Common myeloid progenitor, CD34-positive (primary cell): ENCODE measurements at regions of chr18 and their contacts with region 1.

Region 1: GRCh38 chr18:80157708-80158343 is 48.8 kb downstream of the ADNP2 start:
- DNase-seq: peak; percentile 73 to 88 (median 80)
- H3K4me3 ChIP-seq: no peak overlapping the region
- H3K27ac ChIP-seq: no peak overlapping the region
- H3K4me1 ChIP-seq: peaks cover 0 to 4% (median 1%) of the 10 kb centered on the region in 4 experiments
- H3K27me3 ChIP-seq: peaks cover 0 to 10% (median 2%) of the 10 kb centered on the region in 5 experiments

Region 2: GRCh38 chr18:80147418-80148325 is 10.2 kb before region 1 on chr18:
- CTCF ChIA-PET with region 1: interaction called, 18 read pairs
- POLR2A ChIA-PET with region 1: interaction called, 3 read pairs
- DNase-seq: peak; percentile 80 to 91 (median 89)
- H3K4me3 ChIP-seq: peak overlapping the region; percentile 40 to 83 (median 66)
- H3K27ac ChIP-seq: no peak overlapping the region
- H3K4me1 ChIP-seq: peaks cover 0 to 14% (median 6%) of the 10 kb centered on the region in 4 experiments
- H3K27me3 ChIP-seq: no peaks in the 10 kb centered on the region

Region 3: DNA sequence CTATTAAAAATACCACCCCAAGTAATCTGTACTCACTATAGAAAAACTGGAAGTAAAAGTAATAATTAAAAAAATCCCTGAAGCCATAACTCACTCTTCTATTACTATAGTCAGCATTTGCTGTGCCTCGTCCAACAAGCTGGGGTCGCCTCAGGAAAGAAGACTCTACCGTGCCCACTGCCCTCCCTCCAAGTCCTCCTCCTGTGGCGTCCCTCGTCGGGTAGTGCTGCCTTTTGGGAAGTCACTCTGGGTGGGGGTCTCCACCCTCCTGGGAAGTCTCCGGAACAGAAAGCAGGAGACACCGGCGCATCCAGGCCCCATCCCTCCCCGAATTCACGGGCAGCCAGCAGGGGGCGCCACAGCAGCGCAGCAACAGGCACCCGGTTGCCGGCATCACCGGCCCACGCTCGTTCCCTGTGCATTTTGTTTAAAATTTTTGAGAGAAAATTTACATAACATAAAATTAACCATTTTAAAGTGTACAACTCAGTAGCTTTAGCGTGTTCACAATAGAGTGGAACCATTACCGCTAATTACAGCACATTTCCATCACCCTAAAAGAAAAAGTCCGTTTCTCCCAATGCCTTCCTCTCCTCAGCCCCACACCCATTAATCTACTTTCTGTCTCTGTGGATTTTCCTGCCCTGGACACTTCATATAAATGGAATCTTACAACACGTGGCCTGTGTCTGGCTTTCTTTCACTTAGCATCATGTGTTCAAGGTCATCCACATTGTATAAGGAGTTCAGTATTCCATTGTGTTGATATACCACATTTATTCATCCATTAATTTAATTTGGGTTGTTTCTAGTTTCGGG is 13.4 kb after region 1 on chr18:
- CTCF ChIA-PET with region 1: interaction called, 16 read pairs
- POLR2A ChIA-PET with region 1: no interaction called
- DNase-seq: peak in 2 of 3 donors; percentile 44 to 47
- H3K4me3 ChIP-seq: no peak overlapping the region
- H3K27ac ChIP-seq: no peak overlapping the region
- H3K4me1 ChIP-seq: peaks cover 0 to 2% (median 0%) of the 10 kb centered on the region in 4 experiments
- H3K27me3 ChIP-seq: peaks cover 0 to 18% (median 3%) of the 10 kb centered on the region in 5 experiments

Region 4: DNA sequence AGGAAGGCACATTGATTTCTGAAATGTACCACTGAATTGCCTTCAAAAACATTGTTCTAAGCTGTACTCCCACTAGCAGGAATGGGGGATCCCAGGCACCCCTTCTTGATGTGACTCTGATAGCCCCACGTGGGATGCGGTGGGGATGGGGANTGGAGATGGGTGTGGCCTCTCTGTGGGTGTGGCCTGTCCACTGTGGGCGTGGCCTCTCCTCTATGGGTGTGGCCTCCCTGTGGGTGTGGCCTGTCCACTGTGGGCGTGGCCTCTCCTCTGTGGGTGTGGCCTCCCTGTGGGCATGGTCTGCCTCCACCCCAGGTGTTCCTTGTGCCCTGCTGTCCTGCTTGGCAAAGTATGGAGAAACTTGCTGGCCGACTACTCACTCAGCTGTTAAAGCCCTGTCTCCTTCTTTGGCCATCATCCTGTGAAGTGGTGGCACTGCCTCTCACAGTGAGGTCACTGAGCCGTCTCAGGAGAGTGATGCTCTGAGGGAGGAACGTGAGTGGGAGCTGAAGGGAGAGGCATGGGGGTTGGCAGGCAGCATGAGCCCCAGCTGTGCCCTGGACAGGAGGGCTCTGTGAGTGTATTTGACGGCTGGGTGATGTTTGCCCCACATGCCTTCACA is 96.2 kb after region 1 on chr18:
- CTCF ChIA-PET with region 1: interaction called, 41 read pairs
- POLR2A ChIA-PET with region 1: no interaction called
- DNase-seq: no peak
- H3K4me3 ChIP-seq: no peak overlapping the region
- H3K27ac ChIP-seq: no peak overlapping the region
- H3K4me1 ChIP-seq: no peaks in the 10 kb centered on the region
- H3K27me3 ChIP-seq: peaks cover 0 to 9% (median 3%) of the 10 kb centered on the region in 5 experiments